ENCODE measurements at regions of chr16 and their contacts with region 1.

Region 1: DNA sequence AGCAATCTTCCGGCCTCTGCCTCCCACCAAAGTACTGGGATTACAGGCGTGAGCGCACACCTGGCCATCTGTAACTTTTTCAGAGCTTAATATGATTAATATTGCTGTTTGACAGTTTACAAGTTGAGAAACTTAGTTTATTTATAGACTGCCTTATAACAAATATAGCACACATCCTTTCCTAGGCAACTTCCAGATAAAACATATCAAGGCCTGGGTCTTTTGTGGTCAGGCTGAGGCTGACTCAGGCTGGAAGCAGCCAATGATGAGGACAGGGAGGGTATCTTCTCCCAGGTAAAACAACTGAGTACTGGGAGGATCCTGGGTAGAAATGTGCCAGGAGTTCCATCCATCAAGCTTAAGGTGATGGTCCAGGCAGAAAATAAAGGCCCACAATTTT is 16.2 kb downstream of the LUC7L start:
- DNase-seq: no peak
- ATAC-seq: no peak
- H3K4me3 Mint-ChIP-seq: no peak overlapping the region
- H3K27ac Mint-ChIP-seq: no peak overlapping the region
- H3K4me1 Mint-ChIP-seq: no peaks in the 10 kb centered on the region
- H3K27me3 Mint-ChIP-seq: no peaks in the 10 kb centered on the region
- CTCF ChIP-seq: no peak

Region 2: GRCh38 chr16:191854-192550 is 21.0 kb before region 1 on chr16:
- CTCF ChIA-PET with region 1: no interaction called
- POLR2A ChIA-PET with region 1: interaction called, 10 read pairs
- intact Hi-C with region 1: no loop called
- DNase-seq: no peak
- ATAC-seq: no peak
- H3K4me3 Mint-ChIP-seq: no peak overlapping the region
- H3K27ac Mint-ChIP-seq: no peak overlapping the region
- H3K4me1 Mint-ChIP-seq: no peaks in the 10 kb centered on the region
- H3K27me3 Mint-ChIP-seq: no peaks in the 10 kb centered on the region
- CTCF ChIP-seq: no peak

Region 3: GRCh38 chr16:287298-287811 is 74.4 kb after region 1 on chr16:
- CTCF ChIA-PET with region 1: no interaction called
- POLR2A ChIA-PET with region 1: no interaction called
- intact Hi-C with region 1: no loop called
- DNase-seq: no peak
- ATAC-seq: no peak
- H3K4me3 Mint-ChIP-seq: no peak overlapping the region
- H3K27ac Mint-ChIP-seq: no peak overlapping the region
- H3K4me1 Mint-ChIP-seq: no peaks in the 10 kb centered on the region
- H3K27me3 Mint-ChIP-seq: no peaks in the 10 kb centered on the region
- CTCF ChIP-seq: no peak